ENCODE measurements at regions of chr11 and their contacts with region 1.

Region 1: GRCh38 chr11:13343931-13344717 is 66.5 kb downstream of the BMAL1 start:
- DNase-seq: peak; percentile 60 to 79 (median 70)
- H3K4me3 ChIP-seq: no peak overlapping the region
- H3K27ac ChIP-seq: no peak overlapping the region
- H3K4me1 ChIP-seq: peaks cover 4% of the 10 kb centered on the region
- H3K27me3 ChIP-seq: no peaks in the 10 kb centered on the region
- CTCF ChIP-seq: peak; percentile 59 to 73 (median 73)
- EP300 ChIP-seq: no peak
- POLR2A ChIP-seq: no peak

Region 2: GRCh38 chr11:12706545-12707499 is 637.3 kb before region 1 on chr11:
- intact Hi-C with region 1: no loop called
- DNase-seq: peak in 2 of 5 donors; percentile 29 to 50
- H3K4me3 ChIP-seq: no peak overlapping the region
- H3K27ac ChIP-seq: no peak overlapping the region
- H3K4me1 ChIP-seq: peaks cover 17% of the 10 kb centered on the region
- H3K27me3 ChIP-seq: no peaks in the 10 kb centered on the region
- CTCF ChIP-seq: no peak
- EP300 ChIP-seq: no peak
- POLR2A ChIP-seq: no peak

Region 3: DNA sequence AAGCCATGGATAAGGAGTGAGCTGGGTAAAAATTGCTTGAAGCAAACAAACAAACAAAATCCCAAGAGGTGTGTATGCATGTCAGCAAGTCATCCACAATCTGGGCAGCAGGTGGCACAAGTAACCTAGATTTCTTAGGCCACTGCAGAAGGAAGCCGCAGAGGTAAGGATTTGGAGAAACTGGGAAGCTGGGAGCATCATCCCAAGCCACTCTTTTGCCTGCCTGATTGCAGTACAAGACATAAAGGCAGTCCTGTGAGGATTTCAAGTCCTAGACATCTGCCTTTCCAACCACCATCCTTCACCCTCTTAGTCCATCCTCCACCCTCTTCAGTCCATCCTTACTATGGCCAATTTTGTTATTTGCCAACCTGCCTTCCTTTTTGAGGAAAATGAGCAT is 133.7 kb before region 1 on chr11:
- intact Hi-C with region 1: loop called (anchors 2 to 5 kb)
- DNase-seq: peak; percentile 63 to 78 (median 70)
- H3K4me3 ChIP-seq: no peak overlapping the region
- H3K27ac ChIP-seq: no peak overlapping the region
- H3K4me1 ChIP-seq: peaks cover 7% of the 10 kb centered on the region
- H3K27me3 ChIP-seq: no peaks in the 10 kb centered on the region
- CTCF ChIP-seq: peak; percentile 46 to 67 (median 65)
- EP300 ChIP-seq: no peak
- POLR2A ChIP-seq: no peak

Region 4: DNA sequence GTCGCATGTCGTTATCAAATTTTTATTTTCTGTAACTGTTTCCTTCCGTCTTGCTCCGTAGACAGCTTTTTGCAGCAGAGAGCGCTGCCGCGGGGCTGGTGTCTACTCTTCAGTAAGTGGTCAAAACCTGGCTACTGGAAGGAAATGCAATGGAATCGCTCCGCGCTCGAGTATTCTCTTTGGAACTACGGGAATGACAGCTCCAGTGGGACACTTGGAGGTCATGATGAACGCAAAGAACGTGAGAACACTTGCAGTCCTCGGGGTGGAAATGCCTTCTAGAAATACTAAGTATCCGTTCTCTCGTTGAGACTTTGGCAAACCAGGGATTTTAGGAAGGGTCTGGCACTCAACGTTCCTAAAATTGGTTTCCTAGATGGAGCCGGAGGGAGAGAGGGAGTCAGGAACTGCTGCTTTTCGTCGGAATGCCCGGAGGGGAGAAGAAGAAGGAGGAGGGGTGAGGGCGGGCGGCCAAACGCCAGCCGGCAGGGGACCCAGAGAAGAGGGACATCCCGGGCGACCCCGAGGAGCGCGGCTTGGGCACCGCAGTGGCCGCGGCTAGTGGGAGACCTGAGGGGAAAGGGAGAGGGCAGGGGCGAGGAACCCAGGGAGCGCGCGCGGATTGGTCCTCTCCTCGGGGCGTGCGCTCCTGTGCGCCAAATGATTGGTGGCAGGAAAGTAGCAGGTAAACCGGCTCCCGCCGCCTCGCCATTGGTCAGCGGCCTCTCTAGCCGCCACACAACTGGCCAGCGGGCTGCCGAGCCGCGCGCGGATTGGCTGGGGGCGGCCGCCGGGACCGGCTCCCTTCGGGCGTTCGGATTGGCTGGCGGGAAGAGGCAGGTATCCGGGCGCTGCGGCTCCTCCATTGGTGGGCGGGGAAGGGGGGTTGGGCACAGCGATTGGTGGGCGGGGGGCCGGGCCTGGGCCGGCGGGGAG is 67.0 kb before region 1 on chr11:
- intact Hi-C with region 1: loop called in 3 of 4 experiments (anchors 5 to 10 kb)
- DNase-seq: peak; percentile 97 to 99 (median 98)
- H3K4me3 ChIP-seq: peak overlapping the region; percentile 93
- H3K27ac ChIP-seq: peak overlapping the region; percentile 89 to 95
- H3K4me1 ChIP-seq: peaks cover 2% of the 10 kb centered on the region
- H3K27me3 ChIP-seq: no peaks in the 10 kb centered on the region
- CTCF ChIP-seq: peak in 1 of 3 donors; percentile 36
- EP300 ChIP-seq: no peak
- POLR2A ChIP-seq: peak; percentile 81